ENCODE measurements at regions of chr19 and their contacts with region 1.

Region 1: DNA sequence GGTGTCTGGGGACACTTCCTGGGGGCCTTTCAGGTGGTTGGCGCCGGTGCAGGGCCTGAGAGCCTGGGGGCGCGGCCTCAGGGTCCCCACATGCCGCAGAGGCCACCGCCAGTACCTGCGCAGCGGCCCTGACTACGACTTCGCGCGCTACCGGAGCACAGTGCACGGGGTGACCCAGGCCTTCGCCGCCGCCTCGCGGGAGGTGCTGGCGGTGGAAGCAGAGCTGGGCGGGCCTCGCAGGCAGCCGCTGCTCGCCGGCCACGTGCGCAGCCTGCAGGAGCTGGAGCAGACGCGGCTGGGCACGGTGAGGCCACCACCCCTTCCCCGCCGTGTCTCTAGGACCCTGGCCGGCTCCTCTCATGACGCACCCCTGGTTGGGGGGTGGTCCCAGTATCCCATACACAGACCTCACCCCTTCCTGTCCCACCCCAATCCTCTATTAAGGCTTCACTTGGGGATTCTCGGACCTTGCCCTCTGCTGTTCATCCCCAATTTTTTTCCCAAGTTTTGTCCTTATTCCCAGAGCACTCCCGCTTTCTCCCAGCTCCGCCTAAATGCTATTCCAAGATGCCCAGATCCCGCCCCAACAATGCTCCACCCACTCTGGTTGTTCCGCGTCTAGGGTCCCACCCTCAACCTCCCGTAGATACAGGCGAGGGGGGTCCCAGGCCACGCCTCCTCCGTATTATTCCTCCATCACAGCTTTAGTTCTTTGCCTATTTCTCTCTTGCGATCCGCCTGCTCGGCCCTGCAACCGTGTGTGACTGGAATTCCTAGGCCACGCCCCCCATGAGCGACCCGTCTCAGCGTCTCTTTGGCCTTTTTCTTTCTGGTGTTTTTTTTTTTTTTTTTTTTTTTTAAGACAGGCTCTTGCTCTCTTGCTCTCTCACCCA is 1.0 kb downstream of the REX1BD start:
- DNase-seq: no peak
- H3K4me3 ChIP-seq: peak overlapping the region; percentile 62 to 95 (median 84)
- H3K27ac ChIP-seq: peak overlapping the region; percentile 85 to 95 (median 90)
- H3K4me1 ChIP-seq: peaks cover 22 to 46% (median 24%) of the 10 kb centered on the region in 3 donors
- H3K27me3 ChIP-seq: peaks cover 0 to 2% (median 0%) of the 10 kb centered on the region in 4 donors
- CTCF ChIP-seq: peak in 4 of 6 experiments; percentile 13 to 49 (median 35)
- POLR2A ChIP-seq: no peak

Region 2: GRCh38 chr19:18629166-18630088 is 39.8 kb after region 1 on chr19:
- intact Hi-C with region 1: no loop called
- DNase-seq: no peak
- H3K4me3 ChIP-seq: no peak overlapping the region
- H3K27ac ChIP-seq: peak overlapping the region; percentile 48 to 79 (median 60)
- H3K4me1 ChIP-seq: peaks cover 0 to 6% (median 4%) of the 10 kb centered on the region in 3 donors
- H3K27me3 ChIP-seq: peaks cover 0 to 4% (median 0%) of the 10 kb centered on the region in 4 donors
- CTCF ChIP-seq: no peak
- POLR2A ChIP-seq: no peak

Region 3: DNA sequence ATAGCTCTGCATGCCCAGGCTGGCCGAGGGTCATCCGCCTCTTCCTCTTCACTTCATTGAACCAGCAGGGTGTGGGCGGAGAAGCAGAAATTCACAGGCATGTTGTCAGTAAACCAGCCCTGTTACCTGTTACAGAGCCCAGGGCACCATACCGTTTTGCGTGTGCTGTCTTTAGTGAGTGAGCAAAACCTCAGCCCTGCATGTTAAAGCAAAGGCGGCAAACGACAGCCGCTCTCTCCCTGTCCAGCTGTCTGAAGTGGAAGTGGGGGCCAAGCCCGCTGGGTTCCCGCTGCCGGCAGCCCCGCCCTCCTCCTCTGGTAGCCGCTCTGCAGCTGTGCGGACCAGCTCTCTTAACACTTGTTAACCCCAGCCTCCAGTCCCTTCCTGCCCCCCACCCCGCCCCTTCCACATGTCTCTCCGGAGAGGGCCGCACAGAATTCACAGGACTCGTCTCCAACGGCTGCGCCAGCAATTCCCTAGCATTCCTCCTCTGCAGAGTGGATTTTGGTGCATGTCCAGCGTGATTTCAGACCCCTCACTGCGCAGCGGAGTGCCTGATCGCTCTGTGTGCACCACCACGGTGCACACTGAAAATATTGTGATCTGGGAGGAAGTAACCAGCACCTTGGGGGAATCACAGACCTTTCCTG is 59.9 kb after region 1 on chr19:
- intact Hi-C with region 1: no loop called
- DNase-seq: no peak
- H3K4me3 ChIP-seq: peak overlapping the region in 3 of 4 donors; percentile 9 to 54 (median 9)
- H3K27ac ChIP-seq: peak overlapping the region; percentile 75 to 95 (median 82)
- H3K4me1 ChIP-seq: peaks cover 24 to 69% (median 53%) of the 10 kb centered on the region in 3 donors
- H3K27me3 ChIP-seq: no peaks in the 10 kb centered on the region
- CTCF ChIP-seq: no peak
- POLR2A ChIP-seq: peak in 1 of 4 donors; percentile 18

Region 4: GRCh38 chr19:18672606-18673337 is 83.1 kb after region 1 on chr19:
- intact Hi-C with region 1: loop called (anchors 10 kb)
- DNase-seq: no peak
- H3K4me3 ChIP-seq: no peak overlapping the region
- H3K27ac ChIP-seq: peak overlapping the region in 3 of 4 donors; percentile 36 to 70 (median 49)
- H3K4me1 ChIP-seq: peaks cover 5 to 47% (median 18%) of the 10 kb centered on the region in 3 donors
- H3K27me3 ChIP-seq: no peaks in the 10 kb centered on the region
- CTCF ChIP-seq: no peak
- POLR2A ChIP-seq: no peak

Region 5: GRCh38 chr19:18846862-18847548 is 257.4 kb after region 1 on chr19:
- intact Hi-C with region 1: loop called (anchors 5 kb)
- DNase-seq: no peak
- H3K4me3 ChIP-seq: no peak overlapping the region
- H3K27ac ChIP-seq: peak overlapping the region in 3 of 4 donors; percentile 78 to 81 (median 81)
- H3K4me1 ChIP-seq: peaks cover 29 to 95% (median 68%) of the 10 kb centered on the region in 3 donors
- H3K27me3 ChIP-seq: no peaks in the 10 kb centered on the region
- CTCF ChIP-seq: peak; percentile 58 to 84 (median 81)
- POLR2A ChIP-seq: no peak

Measured in esophagus squamous epithelium (tissue), 5 donors.